ENCODE measurements at regions of chr15 and their contacts with region 1.

Region 1: DNA sequence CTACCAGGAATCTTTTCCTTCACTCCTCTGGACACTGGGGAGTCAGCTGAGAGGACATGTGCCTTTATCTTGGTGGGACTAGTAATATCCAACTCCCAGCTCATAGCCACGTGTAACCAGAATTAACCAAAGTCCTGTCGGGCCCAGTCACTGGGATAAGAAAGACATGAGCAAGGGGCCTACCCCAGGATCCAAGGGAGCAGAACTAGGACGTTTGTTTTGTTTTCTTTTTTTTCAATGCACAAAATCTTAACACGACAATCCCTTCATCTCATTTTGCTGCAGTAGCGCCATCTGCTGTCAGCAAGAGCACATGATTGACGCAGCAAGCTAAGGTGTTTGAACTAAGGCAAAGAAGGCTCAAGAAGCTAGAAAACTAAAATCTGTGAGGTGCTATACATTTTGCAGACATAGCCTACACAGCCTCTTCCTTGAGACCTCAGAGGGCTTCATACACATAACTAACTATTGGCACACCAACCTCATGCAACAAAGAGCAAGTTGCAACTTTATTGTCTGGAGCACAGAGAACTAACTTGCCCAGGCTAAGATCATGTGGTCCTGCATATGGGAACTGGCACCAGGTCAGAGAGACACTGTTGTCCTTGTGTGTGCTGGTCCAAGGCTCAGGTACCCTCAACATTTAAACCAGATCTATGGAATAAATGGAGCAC is 43.6 kb downstream of the RLBP1 start:
- DNase-seq: peak; percentile 55 to 57
- H3K4me3 ChIP-seq: no peak overlapping the region
- H3K4me3 Mint-ChIP-seq: no peak overlapping the region
- H3K27ac Mint-ChIP-seq: no peak overlapping the region
- H3K4me1 ChIP-seq: no peaks in the 10 kb centered on the region
- H3K4me1 Mint-ChIP-seq: no peaks in the 10 kb centered on the region
- H3K27me3 ChIP-seq: no peaks in the 10 kb centered on the region
- H3K27me3 Mint-ChIP-seq: no peaks in the 10 kb centered on the region
- CTCF ChIP-seq: peak; percentile 81 to 84

Region 2: DNA sequence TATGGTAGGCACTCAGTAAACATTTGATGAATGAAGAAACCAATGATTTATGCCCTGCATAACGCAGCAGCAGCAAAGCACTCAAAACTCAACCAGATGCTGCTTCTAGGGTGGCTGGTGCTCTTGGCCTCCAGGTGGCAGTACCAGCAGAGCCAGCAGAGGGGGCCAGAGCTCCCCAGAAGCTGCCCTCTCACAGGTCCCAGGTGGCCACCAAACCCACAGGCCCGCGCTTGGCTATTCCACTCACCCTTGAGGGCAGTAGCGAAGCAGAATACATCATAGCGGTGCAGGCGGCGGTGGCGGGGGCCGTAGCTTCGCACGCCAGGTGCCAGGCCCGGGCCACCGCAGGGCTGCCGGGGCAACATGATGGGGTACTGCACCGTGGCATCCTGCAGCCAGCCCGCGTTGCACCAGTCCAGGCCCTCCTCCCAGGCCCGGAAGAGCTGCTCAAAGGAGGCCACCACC is 299.0 kb before region 1 on chr15:
- CTCF ChIA-PET with region 1: no interaction called
- POLR2A ChIA-PET with region 1: no interaction called
- intact Hi-C with region 1: loop called (anchors 10 kb)
- DNase-seq: peak; percentile 62 to 68
- H3K4me3 ChIP-seq: no peak overlapping the region
- H3K4me3 Mint-ChIP-seq: no peak overlapping the region
- H3K27ac Mint-ChIP-seq: no peak overlapping the region
- H3K4me1 ChIP-seq: no peaks in the 10 kb centered on the region
- H3K4me1 Mint-ChIP-seq: no peaks in the 10 kb centered on the region
- H3K27me3 ChIP-seq: no peaks in the 10 kb centered on the region
- H3K27me3 Mint-ChIP-seq: no peaks in the 10 kb centered on the region
- CTCF ChIP-seq: peak; percentile 76 to 87

Region 3: DNA sequence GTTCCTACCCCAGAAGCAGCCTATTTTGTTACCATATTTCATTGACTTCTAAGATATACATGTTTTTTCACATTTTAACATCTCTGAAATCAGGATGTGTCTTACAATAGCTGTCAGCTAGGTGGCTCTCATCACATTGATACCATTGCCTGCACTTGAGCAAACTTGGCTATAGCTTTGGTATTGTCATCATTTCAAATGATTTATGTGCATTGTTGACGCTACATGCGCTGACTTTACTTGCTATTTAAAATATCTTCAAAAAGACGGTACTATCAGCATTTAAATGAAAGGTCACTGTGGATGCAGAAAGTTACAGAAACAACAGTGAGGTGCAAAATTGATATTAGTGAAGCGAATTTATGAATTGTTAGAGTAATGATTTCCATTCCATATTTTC is 143.5 kb before region 1 on chr15:
- CTCF ChIA-PET with region 1: interaction called, 12 read pairs
- POLR2A ChIA-PET with region 1: no interaction called
- intact Hi-C with region 1: loop called (anchors 1 kb)
- DNase-seq: no peak
- H3K4me3 ChIP-seq: no peak overlapping the region
- H3K4me3 Mint-ChIP-seq: no peak overlapping the region
- H3K27ac Mint-ChIP-seq: no peak overlapping the region
- H3K4me1 ChIP-seq: no peaks in the 10 kb centered on the region
- H3K4me1 Mint-ChIP-seq: no peaks in the 10 kb centered on the region
- H3K27me3 ChIP-seq: no peaks in the 10 kb centered on the region
- H3K27me3 Mint-ChIP-seq: peaks cover 7% of the 10 kb centered on the region
- CTCF ChIP-seq: peak; percentile 22 to 53

Region 4: GRCh38 chr15:89057504-89058133 is 120.2 kb before region 1 on chr15:
- CTCF ChIA-PET with region 1: interaction called, 16 read pairs
- POLR2A ChIA-PET with region 1: no interaction called
- intact Hi-C with region 1: loop called (anchors 1 kb)
- DNase-seq: peak; percentile 77 to 89
- H3K4me3 ChIP-seq: no peak overlapping the region
- H3K4me3 Mint-ChIP-seq: no peak overlapping the region
- H3K27ac Mint-ChIP-seq: no peak overlapping the region
- H3K4me1 ChIP-seq: no peaks in the 10 kb centered on the region; the same call in 1 of the 2 replicates
- H3K4me1 Mint-ChIP-seq: peaks cover 5% of the 10 kb centered on the region
- H3K27me3 ChIP-seq: no peaks in the 10 kb centered on the region
- H3K27me3 Mint-ChIP-seq: no peaks in the 10 kb centered on the region
- CTCF ChIP-seq: peak; percentile 97

Region 5: GRCh38 chr15:89101302-89102191 is 76.2 kb before region 1 on chr15:
- CTCF ChIA-PET with region 1: no interaction called
- POLR2A ChIA-PET with region 1: no interaction called
- intact Hi-C with region 1: no loop called
- DNase-seq: peak; percentile 28 to 57
- H3K4me3 ChIP-seq: no peak overlapping the region
- H3K4me3 Mint-ChIP-seq: no peak overlapping the region
- H3K27ac Mint-ChIP-seq: peak overlapping the region; percentile 4
- H3K4me1 ChIP-seq: peaks cover 23% of the 10 kb centered on the region
- H3K4me1 Mint-ChIP-seq: peaks cover 34% of the 10 kb centered on the region
- H3K27me3 ChIP-seq: no peaks in the 10 kb centered on the region
- H3K27me3 Mint-ChIP-seq: no peaks in the 10 kb centered on the region
- CTCF ChIP-seq: no peak

Region 6: DNA sequence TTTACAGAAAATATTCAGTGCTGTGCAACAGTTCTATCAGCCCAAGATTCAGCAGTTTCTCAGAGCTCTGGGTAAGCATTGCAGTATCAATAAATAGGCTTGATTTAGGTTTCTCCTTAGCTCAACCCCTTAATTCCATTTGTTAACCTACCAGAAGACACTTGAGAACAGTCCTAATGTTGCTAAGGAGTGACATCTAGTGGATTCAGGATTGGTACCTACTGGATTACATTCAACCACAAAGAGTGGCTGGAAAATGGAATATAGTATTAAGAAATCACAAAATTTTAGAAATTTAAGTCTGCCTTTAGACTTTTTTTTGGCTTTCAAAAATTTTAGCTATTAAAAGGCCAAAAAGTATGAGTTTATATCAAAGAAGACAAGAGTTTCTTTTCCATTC is 122.1 kb after region 1 on chr15:
- CTCF ChIA-PET with region 1: no interaction called
- POLR2A ChIA-PET with region 1: no interaction called
- intact Hi-C with region 1: no loop called
- DNase-seq: no peak
- H3K4me3 ChIP-seq: no peak overlapping the region
- H3K4me3 Mint-ChIP-seq: no peak overlapping the region
- H3K27ac Mint-ChIP-seq: no peak overlapping the region
- H3K4me1 ChIP-seq: no peaks in the 10 kb centered on the region
- H3K4me1 Mint-ChIP-seq: no peaks in the 10 kb centered on the region
- H3K27me3 ChIP-seq: no peaks in the 10 kb centered on the region
- H3K27me3 Mint-ChIP-seq: no peaks in the 10 kb centered on the region
- CTCF ChIP-seq: peak in 1 of 2 experiments; percentile 16

Measured in Caco-2 (cell line).